Mammary epithelial cell (primary cell): ENCODE measurements at regions of chr11 and their contacts with region 1.

Region 1: DNA sequence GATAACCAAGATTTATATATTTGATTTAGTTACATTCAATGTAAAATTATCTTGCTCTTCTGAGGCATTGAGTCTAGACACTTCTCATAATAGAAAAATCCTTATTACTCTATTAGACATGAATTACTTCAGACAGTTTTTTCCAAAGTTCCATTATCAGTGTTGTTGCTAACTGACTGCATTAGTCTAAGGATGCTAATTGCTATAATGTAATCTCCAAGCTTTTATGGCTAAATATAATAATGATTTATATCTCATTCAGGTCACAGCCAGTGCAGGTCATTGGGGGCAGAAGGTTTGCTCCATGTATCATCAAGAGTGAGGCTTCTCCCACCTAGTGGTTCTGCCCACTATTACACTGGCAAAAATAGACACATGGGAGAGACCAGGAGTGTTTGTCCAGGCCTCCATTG is 377.2 kb upstream of the DDI1 start:
- DNase-seq: peak; percentile 19
- H3K4me3 ChIP-seq: no peak overlapping the region
- H3K27ac ChIP-seq: no peak overlapping the region
- H3K4me1 ChIP-seq: no peaks in the 10 kb centered on the region
- H3K27me3 ChIP-seq: no peaks in the 10 kb centered on the region
- CTCF ChIP-seq: peak; percentile 46 to 60

Region 2: DNA sequence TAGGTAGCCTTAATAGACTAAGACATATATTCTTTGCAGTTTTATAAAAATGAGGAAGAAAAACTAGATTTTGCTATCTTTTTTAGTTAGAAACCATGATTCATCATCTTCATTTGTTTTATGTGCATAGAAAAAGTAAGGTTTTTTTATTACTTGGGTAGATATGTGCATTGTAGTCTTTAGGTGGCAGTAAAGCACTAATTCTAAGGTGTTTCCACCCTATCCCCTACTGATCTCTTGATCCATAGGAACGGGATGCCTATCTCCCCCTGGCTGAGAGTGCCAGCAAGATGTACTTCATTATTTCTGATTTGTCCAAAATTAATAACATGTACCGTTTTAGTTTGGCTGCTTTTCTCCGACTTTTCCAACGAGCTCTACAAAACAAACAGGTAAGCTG is 401.9 kb before region 1 on chr11:
- CTCF ChIA-PET with region 1: no interaction called
- dilution Hi-C with region 1: no loop called
- in situ Hi-C with region 1: no loop called
- intact Hi-C with region 1: loop called (anchors 1 kb)
- DNase-seq: no peak
- H3K4me3 ChIP-seq: no peak overlapping the region
- H3K27ac ChIP-seq: no peak overlapping the region
- H3K4me1 ChIP-seq: no peaks in the 10 kb centered on the region
- H3K27me3 ChIP-seq: no peaks in the 10 kb centered on the region
- CTCF ChIP-seq: peak; percentile 29 to 42

Region 3: GRCh38 chr11:103619480-103619879 is 39.7 kb before region 1 on chr11:
- CTCF ChIA-PET with region 1: no interaction called
- dilution Hi-C with region 1: no loop called
- in situ Hi-C with region 1: no loop called
- intact Hi-C with region 1: loop called (anchors 1 kb)
- DNase-seq: peak; percentile 18
- H3K4me3 ChIP-seq: no peak overlapping the region
- H3K27ac ChIP-seq: no peak overlapping the region
- H3K4me1 ChIP-seq: peaks cover 6% of the 10 kb centered on the region
- H3K27me3 ChIP-seq: no peaks in the 10 kb centered on the region
- CTCF ChIP-seq: peak; percentile 26 to 52